ENCODE measurements at regions of chr15 and their contacts with region 1.

Region 1: GRCh38 chr15:85044251-85044853 is 62.7 kb downstream of the PDE8A start:
- DNase-seq: peak in 1 of 2 donors; percentile 68
- H3K4me3 ChIP-seq: no peak overlapping the region
- H3K27ac ChIP-seq: no peak overlapping the region
- H3K4me1 ChIP-seq: peaks cover 0 to 2% of the 10 kb centered on the region in 2 donors
- H3K27me3 ChIP-seq: no peaks in the 10 kb centered on the region
- CTCF ChIP-seq: peak; percentile 43 to 70 (median 65)

Region 2: GRCh38 chr15:84863565-84864443 is 180.5 kb before region 1 on chr15:
- intact Hi-C with region 1: loop called (anchors 10 kb)
- DNase-seq: peak in 1 of 2 donors; percentile 64
- H3K4me3 ChIP-seq: peak overlapping the region in 1 of 2 donors; percentile 17
- H3K27ac ChIP-seq: peak overlapping the region; percentile 4 to 44
- H3K4me1 ChIP-seq: peaks cover 6 to 16% of the 10 kb centered on the region in 2 donors
- H3K27me3 ChIP-seq: no peaks in the 10 kb centered on the region
- CTCF ChIP-seq: peak; percentile 29 to 66 (median 37)

Region 3: GRCh38 chr15:84955089-84955848 is 89.1 kb before region 1 on chr15:
- intact Hi-C with region 1: loop called (anchors 1 kb)
- DNase-seq: peak; percentile 51 to 88
- H3K4me3 ChIP-seq: peak overlapping the region in 1 of 2 donors; percentile 36
- H3K27ac ChIP-seq: no peak overlapping the region
- H3K4me1 ChIP-seq: peaks cover 2 to 9% of the 10 kb centered on the region in 2 donors
- H3K27me3 ChIP-seq: no peaks in the 10 kb centered on the region
- CTCF ChIP-seq: peak; percentile 81 to 85 (median 84)

Region 4: GRCh38 chr15:85063126-85064079 is 19.1 kb after region 1 on chr15:
- intact Hi-C with region 1: no loop called
- DNase-seq: no peak
- H3K4me3 ChIP-seq: no peak overlapping the region
- H3K27ac ChIP-seq: no peak overlapping the region
- H3K4me1 ChIP-seq: no peaks in the 10 kb centered on the region
- H3K27me3 ChIP-seq: no peaks in the 10 kb centered on the region
- CTCF ChIP-seq: no peak